CD8-positive, alpha-beta memory T cell (primary cell): ENCODE measurements at regions of chrX and their contacts with region 1.

Region 1: GRCh38 chrX:49165901-49166881 is 3.6 kb downstream of the MAGIX start:
- DNase-seq: peak; percentile 61 to 86 (median 69)
- H3K4me3 ChIP-seq: peak overlapping the region; percentile 50
- H3K4me3 Mint-ChIP-seq: peak overlapping the region; percentile 83 to 94 (median 90)
- H3K27ac ChIP-seq: peak overlapping the region; percentile 79
- H3K27ac Mint-ChIP-seq: peak overlapping the region; percentile 84 to 100 (median 99)
- H3K4me1 ChIP-seq: peaks cover 16% of the 10 kb centered on the region
- H3K4me1 Mint-ChIP-seq: peaks cover 22 to 42% (median 26%) of the 10 kb centered on the region in 3 donors
- H3K27me3 ChIP-seq: no peaks in the 10 kb centered on the region
- H3K27me3 Mint-ChIP-seq: no peaks in the 10 kb centered on the region

Region 2: GRCh38 chrX:49053223-49054072 is 112.7 kb before region 1 on chrX:
- CTCF ChIA-PET with region 1: no interaction called
- POLR2A ChIA-PET with region 1: no interaction called
- DNase-seq: peak; percentile 37 to 79 (median 51)
- H3K4me3 ChIP-seq: peak overlapping the region; percentile 41
- H3K4me3 Mint-ChIP-seq: peak overlapping the region; percentile 79 to 95 (median 85)
- H3K27ac ChIP-seq: peak overlapping the region; percentile 51
- H3K27ac Mint-ChIP-seq: peak overlapping the region; percentile 56 to 96 (median 94)
- H3K4me1 ChIP-seq: peaks cover 14% of the 10 kb centered on the region
- H3K4me1 Mint-ChIP-seq: peaks cover 22 to 41% (median 32%) of the 10 kb centered on the region in 3 donors
- H3K27me3 ChIP-seq: no peaks in the 10 kb centered on the region
- H3K27me3 Mint-ChIP-seq: peaks cover 0 to 9% of the 10 kb centered on the region in 2 donors

Region 3: DNA sequence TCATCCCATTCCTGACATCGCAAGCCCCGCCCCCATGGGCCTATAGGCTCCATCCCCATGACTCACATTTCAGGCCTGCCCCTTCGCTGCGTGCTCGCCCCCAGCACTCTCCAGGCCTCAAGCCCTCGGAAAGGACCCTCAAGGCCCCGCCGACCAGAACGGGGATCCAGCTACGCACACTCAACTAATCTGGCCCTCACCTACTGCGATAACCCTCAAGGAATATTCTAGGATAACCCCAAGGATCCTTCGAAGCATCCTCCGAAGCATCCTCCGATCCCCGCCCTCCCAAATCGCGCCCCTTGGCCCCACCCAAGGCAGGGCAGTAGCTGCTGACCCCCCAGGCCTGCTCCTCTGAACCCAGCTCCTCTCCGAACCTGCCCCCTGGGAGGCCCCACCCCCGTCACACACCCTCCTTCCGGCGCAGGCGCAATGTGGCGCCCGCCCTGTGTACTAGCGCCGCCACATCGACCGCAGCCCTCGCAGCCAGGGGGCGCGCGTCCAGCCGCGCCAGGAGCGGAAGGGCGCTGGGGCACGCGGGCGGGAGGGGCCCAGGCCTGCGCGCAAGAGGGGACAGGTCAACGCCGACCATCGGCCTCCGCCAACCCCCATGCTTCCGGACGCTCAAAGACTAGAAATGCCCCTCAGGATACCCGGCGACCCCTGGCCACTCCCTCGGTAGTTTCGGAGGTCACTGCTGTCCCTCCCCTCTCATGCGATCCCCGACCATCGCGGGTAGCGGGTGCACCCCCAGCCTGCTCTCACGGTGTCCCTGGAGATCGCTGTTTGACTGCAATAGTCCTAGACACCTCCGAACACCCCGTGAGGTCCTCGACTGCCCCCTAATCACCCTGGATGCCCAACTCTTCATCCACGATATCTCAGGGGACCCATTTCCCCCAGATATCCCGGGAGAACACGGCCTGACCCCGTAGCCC is 10.0 kb before region 1 on chrX:
- CTCF ChIA-PET with region 1: interaction called, 31 read pairs
- POLR2A ChIA-PET with region 1: interaction called, 6 read pairs
- DNase-seq: peak; percentile 74 to 92 (median 83)
- H3K4me3 ChIP-seq: peak overlapping the region; percentile 65
- H3K4me3 Mint-ChIP-seq: peak overlapping the region; percentile 89 to 97 (median 93)
- H3K27ac ChIP-seq: peak overlapping the region; percentile 75
- H3K27ac Mint-ChIP-seq: peak overlapping the region; percentile 76 to 98 (median 97)
- H3K4me1 ChIP-seq: peaks cover 9% of the 10 kb centered on the region
- H3K4me1 Mint-ChIP-seq: peaks cover 15 to 20% (median 19%) of the 10 kb centered on the region in 3 donors
- H3K27me3 ChIP-seq: no peaks in the 10 kb centered on the region
- H3K27me3 Mint-ChIP-seq: peaks cover 0 to 3% of the 10 kb centered on the region in 2 donors

Region 4: GRCh38 chrX:49177338-49177833 is 11.2 kb after region 1 on chrX:
- CTCF ChIA-PET with region 1: interaction called, 11 read pairs
- POLR2A ChIA-PET with region 1: no interaction called
- DNase-seq: no peak
- H3K4me3 ChIP-seq: no peak overlapping the region
- H3K4me3 Mint-ChIP-seq: no peak overlapping the region
- H3K27ac ChIP-seq: no peak overlapping the region
- H3K27ac Mint-ChIP-seq: peak overlapping the region in 6 of 8 donors; percentile 16 to 82 (median 72)
- H3K4me1 ChIP-seq: peaks cover 7% of the 10 kb centered on the region
- H3K4me1 Mint-ChIP-seq: peaks cover 8 to 15% (median 8%) of the 10 kb centered on the region in 3 donors
- H3K27me3 ChIP-seq: no peaks in the 10 kb centered on the region
- H3K27me3 Mint-ChIP-seq: no peaks in the 10 kb centered on the region

Region 5: GRCh38 chrX:49191033-49191871 is 25.1 kb after region 1 on chrX:
- CTCF ChIA-PET with region 1: interaction called, 25 read pairs
- POLR2A ChIA-PET with region 1: interaction called, 9 read pairs
- DNase-seq: peak; percentile 67 to 92 (median 88)
- H3K4me3 ChIP-seq: peak overlapping the region; percentile 75
- H3K4me3 Mint-ChIP-seq: peak overlapping the region; percentile 79 to 94 (median 91)
- H3K27ac ChIP-seq: peak overlapping the region; percentile 79
- H3K27ac Mint-ChIP-seq: peak overlapping the region; percentile 55 to 95 (median 90)
- H3K4me1 ChIP-seq: peaks cover 16% of the 10 kb centered on the region
- H3K4me1 Mint-ChIP-seq: peaks cover 18 to 22% (median 21%) of the 10 kb centered on the region in 3 donors
- H3K27me3 ChIP-seq: no peaks in the 10 kb centered on the region
- H3K27me3 Mint-ChIP-seq: peaks cover 0 to 5% of the 10 kb centered on the region in 2 donors

Region 6: DNA sequence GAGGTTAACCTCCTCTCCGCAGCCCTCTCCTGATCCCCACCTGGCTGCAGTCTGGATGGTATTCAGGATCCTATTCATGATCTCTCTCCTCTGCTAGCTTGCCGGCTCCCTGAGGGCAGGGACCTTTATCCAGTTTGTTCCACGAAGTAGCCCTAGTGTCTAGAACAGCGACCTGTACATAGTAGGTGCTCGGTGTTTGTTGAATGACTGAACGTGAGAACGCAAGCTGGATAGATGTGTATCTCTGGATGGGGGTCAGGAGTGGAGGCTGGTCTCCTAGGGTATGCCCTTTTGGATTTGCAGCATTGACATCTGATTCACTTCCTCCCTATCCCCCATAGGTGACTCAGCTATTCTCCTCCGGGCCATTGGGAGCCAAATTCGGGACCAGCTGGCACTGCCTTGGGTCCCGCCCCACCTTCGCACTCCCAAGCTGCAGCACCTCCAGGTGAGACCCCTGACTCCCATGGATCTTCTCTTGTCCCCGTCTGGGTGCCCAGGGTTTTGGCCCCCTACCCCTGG is 76.4 kb after region 1 on chrX:
- CTCF ChIA-PET with region 1: no interaction called
- POLR2A ChIA-PET with region 1: no interaction called
- DNase-seq: no peak
- H3K4me3 ChIP-seq: no peak overlapping the region
- H3K4me3 Mint-ChIP-seq: no peak overlapping the region
- H3K27ac ChIP-seq: no peak overlapping the region
- H3K27ac Mint-ChIP-seq: peak overlapping the region in 2 of 8 donors; percentile 27 to 81
- H3K4me1 ChIP-seq: peaks cover 6% of the 10 kb centered on the region
- H3K4me1 Mint-ChIP-seq: peaks cover 4 to 16% (median 6%) of the 10 kb centered on the region in 3 donors
- H3K27me3 ChIP-seq: no peaks in the 10 kb centered on the region
- H3K27me3 Mint-ChIP-seq: peaks cover 0 to 2% of the 10 kb centered on the region in 2 donors